Activated T-helper 1 cell treated with anti-CD3 and anti-CD28 coated beads, Interleukin-12 subunit alpha, Interleukin-12 subunit beta, Interleukin-2, Interleukin-4 antibody, amounts not matched to agents 30 ng/mL and 10 ng/mL and 1 ng/mL, durations not matched to agents 14 hours and 24 hours and 36 hours (primary cell): ENCODE measurements at regions of chr1 and their contacts with region 1.

Region 1: GRCh38 chr1:89719502-89720306 is 86.8 kb downstream of the LRRC8C start:
- DNase-seq: no peak
- H3K4me3 Mint-ChIP-seq: peak overlapping the region; percentile 76
- H3K27ac Mint-ChIP-seq: peak overlapping the region; percentile 100
- H3K4me1 Mint-ChIP-seq: peaks cover 88% of the 10 kb centered on the region
- H3K27me3 Mint-ChIP-seq: no peaks in the 10 kb centered on the region

Region 2: GRCh38 chr1:89041119-89041641 is 678.5 kb before region 1 on chr1:
- intact Hi-C with region 1: loop called (anchors 1 kb)
- DNase-seq: no peak
- H3K4me3 Mint-ChIP-seq: peak overlapping the region; percentile 19
- H3K27ac Mint-ChIP-seq: peak overlapping the region; percentile 69
- H3K4me1 Mint-ChIP-seq: peaks cover 35% of the 10 kb centered on the region
- H3K27me3 Mint-ChIP-seq: peaks cover 1% of the 10 kb centered on the region

Region 3: DNA sequence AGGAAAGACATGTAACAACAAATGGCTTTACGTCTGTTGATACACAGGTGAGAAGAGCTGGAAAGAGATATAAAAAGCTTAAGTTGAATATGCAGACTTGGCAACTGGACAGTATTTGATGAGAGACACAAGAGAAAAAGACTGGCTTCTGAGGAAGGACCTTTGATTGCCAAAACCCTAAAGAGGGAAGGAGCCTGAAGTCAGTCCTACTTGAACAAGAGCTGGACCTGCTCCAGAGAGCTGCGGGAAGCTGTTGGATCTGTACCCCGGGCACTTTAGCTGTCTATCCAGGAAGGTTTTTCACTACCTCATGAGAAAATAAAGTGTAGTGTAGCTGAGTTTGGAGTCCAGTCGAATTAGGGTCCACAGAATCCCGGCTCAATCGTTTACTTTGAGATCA is 220.4 kb before region 1 on chr1:
- intact Hi-C with region 1: no loop called
- DNase-seq: no peak
- H3K4me3 Mint-ChIP-seq: no peak overlapping the region
- H3K27ac Mint-ChIP-seq: no peak overlapping the region
- H3K4me1 Mint-ChIP-seq: no peaks in the 10 kb centered on the region
- H3K27me3 Mint-ChIP-seq: peaks cover 12% of the 10 kb centered on the region

Region 4: DNA sequence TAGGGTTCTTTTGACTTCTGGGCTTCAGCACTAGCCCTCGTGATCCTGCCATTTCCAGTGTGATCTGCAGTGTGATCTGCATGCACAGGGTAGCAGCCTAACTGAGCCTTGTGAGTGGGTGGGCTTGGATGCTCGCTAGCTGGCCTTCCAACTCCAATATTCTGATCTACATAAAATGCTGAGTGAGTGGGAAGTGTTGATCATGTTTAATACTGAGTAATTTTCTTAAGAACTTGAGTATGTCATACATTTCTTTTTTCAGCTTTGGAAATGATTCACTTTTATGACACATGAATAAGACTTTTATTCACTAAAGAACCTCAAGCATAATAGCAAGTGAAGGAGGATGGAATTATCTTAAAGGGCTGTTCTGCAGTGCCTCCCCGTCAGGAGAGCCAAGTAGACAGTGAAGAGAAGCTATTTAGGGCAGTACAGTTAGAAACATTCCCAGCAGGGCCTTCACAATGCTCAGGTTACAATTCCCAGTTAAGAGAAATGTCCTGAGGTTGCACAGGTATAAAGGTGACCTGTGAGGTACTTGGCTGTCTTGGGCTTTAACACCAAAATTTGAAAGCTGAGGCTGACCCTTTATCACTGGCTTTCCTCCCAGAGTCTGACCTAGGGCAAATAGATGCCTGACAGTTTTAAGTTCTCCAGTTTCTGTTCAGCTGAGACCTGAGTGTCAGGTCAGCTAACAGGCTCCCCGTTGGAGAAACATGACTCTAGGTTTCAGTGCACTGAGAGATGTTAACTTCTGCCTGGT is 115.9 kb before region 1 on chr1:
- intact Hi-C with region 1: loop called (anchors 1 kb)
- DNase-seq: no peak
- H3K4me3 Mint-ChIP-seq: peak overlapping the region; percentile 56
- H3K27ac Mint-ChIP-seq: peak overlapping the region; percentile 99
- H3K4me1 Mint-ChIP-seq: peaks cover 97% of the 10 kb centered on the region
- H3K27me3 Mint-ChIP-seq: no peaks in the 10 kb centered on the region

Region 5: DNA sequence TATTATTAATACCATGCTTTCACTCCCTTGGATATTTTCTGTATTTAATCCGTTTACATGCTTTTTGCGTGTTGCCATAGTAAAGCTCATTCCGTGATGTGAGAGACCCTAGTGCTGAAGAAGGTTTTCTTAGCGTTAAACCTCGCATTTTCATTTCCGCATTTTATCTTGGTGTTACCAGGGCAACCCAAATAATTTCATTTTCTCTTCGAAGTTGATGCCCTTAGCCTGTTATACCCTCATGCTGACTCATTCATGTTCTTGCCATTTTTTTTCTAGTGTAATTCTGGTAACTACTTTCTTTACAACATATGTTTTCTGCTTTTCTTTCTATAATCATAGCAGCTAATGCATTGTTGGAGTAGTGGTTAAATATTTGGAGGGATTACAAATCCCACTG is 49.5 kb before region 1 on chr1:
- intact Hi-C with region 1: loop called (anchors 1 kb)
- DNase-seq: no peak
- H3K4me3 Mint-ChIP-seq: peak overlapping the region; percentile 32
- H3K27ac Mint-ChIP-seq: peak overlapping the region; percentile 79
- H3K4me1 Mint-ChIP-seq: peaks cover 86% of the 10 kb centered on the region
- H3K27me3 Mint-ChIP-seq: no peaks in the 10 kb centered on the region

Region 6: GRCh38 chr1:89746424-89747149 is 26.9 kb after region 1 on chr1:
- intact Hi-C with region 1: loop called (anchors 1 kb)
- DNase-seq: no peak
- H3K4me3 Mint-ChIP-seq: peak overlapping the region; percentile 28
- H3K27ac Mint-ChIP-seq: peak overlapping the region; percentile 86
- H3K4me1 Mint-ChIP-seq: peaks cover 40% of the 10 kb centered on the region
- H3K27me3 Mint-ChIP-seq: peaks cover 3% of the 10 kb centered on the region

Region 7: DNA sequence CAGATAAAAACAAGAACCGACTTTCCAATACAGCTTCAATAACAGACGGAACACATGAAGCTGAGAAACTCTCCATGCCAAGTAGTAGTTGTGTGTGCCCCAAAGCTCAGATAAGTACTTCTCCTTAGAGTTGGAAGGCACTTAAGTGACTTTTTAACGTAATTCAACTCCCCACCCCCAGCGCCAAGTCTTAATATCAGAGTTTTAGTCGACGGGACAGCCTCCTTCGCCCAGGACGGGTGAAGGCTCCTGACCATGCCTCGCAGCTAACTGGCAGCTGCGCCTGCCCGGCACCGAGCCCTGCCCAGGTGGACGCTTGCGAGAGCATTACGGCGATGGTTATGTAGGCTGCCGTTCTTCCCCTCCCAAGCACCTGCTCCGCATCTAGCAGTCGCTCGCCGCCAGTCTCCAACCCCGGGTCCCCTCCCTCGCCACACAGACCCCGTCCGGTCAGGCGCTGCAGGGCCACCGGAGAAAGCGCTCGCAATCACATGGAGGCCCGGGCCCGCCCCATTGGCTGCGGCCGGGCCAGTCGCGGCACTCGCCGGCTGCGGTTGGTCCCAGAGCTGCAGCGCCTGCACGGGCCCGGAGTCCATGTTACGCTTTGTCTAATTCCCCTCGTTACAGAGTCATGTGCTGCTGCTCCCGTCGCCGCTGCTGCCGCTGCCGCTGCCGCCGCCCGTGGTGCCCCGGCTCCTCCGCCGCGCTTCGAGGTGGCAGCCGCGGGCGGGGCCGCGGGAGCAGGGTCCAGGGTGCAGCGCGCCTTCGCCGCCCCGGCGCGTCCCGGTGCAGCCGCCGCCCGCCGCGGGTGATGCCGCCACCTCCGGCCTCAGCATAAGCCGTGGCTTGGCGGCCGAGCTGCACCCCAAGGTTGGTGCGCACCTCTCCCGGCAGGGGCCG is 101.0 kb after region 1 on chr1 and contains the start of gene LRRC8D:
- intact Hi-C with region 1: loop called (anchors 1 kb)
- DNase-seq: peak; percentile 72
- H3K4me3 Mint-ChIP-seq: peak within 1 kb of the TSS; percentile 84
- H3K27ac Mint-ChIP-seq: peak within 1 kb of the TSS; percentile 68
- H3K4me1 Mint-ChIP-seq: peaks cover 15% of the 10 kb centered on the region
- H3K27me3 Mint-ChIP-seq: peaks cover 8% of the 10 kb centered on the region
- total RNA-seq, gene LRRC8D: 43.3 and 45.0 TPM in 2 replicates

Region 8: GRCh38 chr1:90175490-90176170 is 455.9 kb after region 1 on chr1:
- intact Hi-C with region 1: no loop called
- DNase-seq: no peak
- H3K4me3 Mint-ChIP-seq: no peak overlapping the region
- H3K27ac Mint-ChIP-seq: no peak overlapping the region
- H3K4me1 Mint-ChIP-seq: no peaks in the 10 kb centered on the region
- H3K27me3 Mint-ChIP-seq: peaks cover 4% of the 10 kb centered on the region

Region 9: GRCh38 chr1:90550626-90551406 is 831.1 kb after region 1 on chr1:
- intact Hi-C with region 1: no loop called
- DNase-seq: no peak
- H3K4me3 Mint-ChIP-seq: no peak overlapping the region
- H3K27ac Mint-ChIP-seq: no peak overlapping the region
- H3K4me1 Mint-ChIP-seq: no peaks in the 10 kb centered on the region
- H3K27me3 Mint-ChIP-seq: no peaks in the 10 kb centered on the region

Region 10: GRCh38 chr1:90925928-90926869 is 1206.5 kb after region 1 on chr1:
- intact Hi-C with region 1: no loop called
- DNase-seq: no peak
- H3K4me3 Mint-ChIP-seq: no peak overlapping the region
- H3K27ac Mint-ChIP-seq: no peak overlapping the region
- H3K4me1 Mint-ChIP-seq: peaks cover 49% of the 10 kb centered on the region
- H3K27me3 Mint-ChIP-seq: no peaks in the 10 kb centered on the region